SK-N-SH (cell line): ENCODE measurements at regions of chr12 and their contacts with region 1.

Region 1: GRCh38 chr12:125183187-125184067 is 118.2 kb downstream of the AACS start:
- DNase-seq: peak; percentile 92
- H3K4me3 ChIP-seq: peak overlapping the region in 1 of 2 experiments; percentile 5; a peak in 2 of 4 replicates
- H3K27ac ChIP-seq: no peak overlapping the region
- H3K4me1 ChIP-seq: no peaks in the 10 kb centered on the region; a peak in 1 of 4 replicates
- H3K27me3 ChIP-seq: peaks cover 25% of the 10 kb centered on the region
- CTCF ChIP-seq: peak; percentile 95
- EP300 ChIP-seq: no peak
- RAD21 ChIP-seq: peak; percentile 95

Region 2: GRCh38 chr12:125169870-125170269 is 13.6 kb before region 1 on chr12:
- CTCF ChIA-PET with region 1: interaction called, 22 read pairs
- POLR2A ChIA-PET with region 1: no interaction called
- DNase-seq: no peak
- H3K4me3 ChIP-seq: no peak overlapping the region
- H3K27ac ChIP-seq: no peak overlapping the region
- H3K4me1 ChIP-seq: no peaks in the 10 kb centered on the region
- H3K27me3 ChIP-seq: no peaks in the 10 kb centered on the region; the same call in 1 of the 2 replicates
- CTCF ChIP-seq: no peak
- EP300 ChIP-seq: no peak
- RAD21 ChIP-seq: no peak

Region 3: DNA sequence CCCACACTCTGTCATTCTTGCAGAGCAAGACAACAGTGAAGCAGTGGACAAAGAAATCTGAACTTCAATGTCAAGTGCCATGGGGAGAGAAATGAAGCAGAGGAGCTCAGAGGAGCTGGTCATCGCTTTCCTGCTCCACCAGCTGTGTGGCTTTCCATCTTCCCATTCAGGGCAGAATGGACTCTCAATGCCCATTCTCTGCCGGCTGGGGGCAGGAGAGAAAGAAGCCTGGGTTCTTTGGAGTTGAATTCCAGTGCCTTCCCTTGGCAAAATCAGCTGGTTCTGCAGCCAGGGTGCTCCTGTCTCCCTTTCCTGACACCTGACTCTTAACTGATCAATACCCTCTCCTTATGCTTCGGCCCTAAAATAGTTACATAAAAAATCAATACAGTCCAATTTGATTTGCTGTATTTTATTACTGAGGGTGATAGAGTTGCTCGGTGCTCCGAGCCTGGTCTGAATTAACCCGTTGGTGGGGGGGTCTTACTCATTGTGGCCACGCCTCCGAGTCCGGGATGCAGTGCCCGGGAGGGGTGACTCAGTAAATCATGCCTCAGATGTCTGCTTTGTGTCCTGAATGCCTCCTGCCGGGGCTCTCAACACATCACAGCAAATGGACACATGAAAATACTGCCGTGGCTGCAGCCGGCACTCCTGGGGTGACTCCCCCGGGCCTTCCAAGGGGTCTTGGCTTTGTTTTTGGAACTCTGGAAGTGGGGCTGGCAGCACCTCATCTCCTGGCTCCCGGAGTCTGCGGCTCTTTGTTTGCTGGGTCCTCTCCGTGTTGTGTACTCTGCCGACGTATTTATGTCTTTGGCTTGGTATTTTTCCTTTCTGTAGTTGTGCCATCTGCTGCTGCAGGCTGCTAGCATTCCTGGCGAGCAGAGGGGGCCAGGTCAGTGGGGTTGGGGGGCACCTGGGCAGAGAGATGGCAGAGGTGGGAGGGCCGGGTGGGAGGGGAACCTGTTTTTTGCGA is 10.7 kb after region 1 on chr12:
- CTCF ChIA-PET with region 1: interaction called, 62 read pairs
- POLR2A ChIA-PET with region 1: no interaction called
- DNase-seq: peak; percentile 65
- H3K4me3 ChIP-seq: peak overlapping the region; percentile 6 to 32; a peak in 3 of 4 replicates
- H3K27ac ChIP-seq: no peak overlapping the region
- H3K4me1 ChIP-seq: no peaks in the 10 kb centered on the region; a peak in 1 of 4 replicates
- H3K27me3 ChIP-seq: peaks cover 26% of the 10 kb centered on the region
- CTCF ChIP-seq: no peak
- EP300 ChIP-seq: no peak
- RAD21 ChIP-seq: no peak

Region 4: GRCh38 chr12:125203145-125203765 is 19.8 kb after region 1 on chr12:
- CTCF ChIA-PET with region 1: interaction called, 62 read pairs
- POLR2A ChIA-PET with region 1: no interaction called
- DNase-seq: no peak
- H3K4me3 ChIP-seq: no peak overlapping the region
- H3K27ac ChIP-seq: no peak overlapping the region
- H3K4me1 ChIP-seq: no peaks in the 10 kb centered on the region
- H3K27me3 ChIP-seq: no peaks in the 10 kb centered on the region; the same call in 1 of the 2 replicates
- CTCF ChIP-seq: peak; percentile 56
- EP300 ChIP-seq: no peak
- RAD21 ChIP-seq: peak; percentile 50

Region 5: DNA sequence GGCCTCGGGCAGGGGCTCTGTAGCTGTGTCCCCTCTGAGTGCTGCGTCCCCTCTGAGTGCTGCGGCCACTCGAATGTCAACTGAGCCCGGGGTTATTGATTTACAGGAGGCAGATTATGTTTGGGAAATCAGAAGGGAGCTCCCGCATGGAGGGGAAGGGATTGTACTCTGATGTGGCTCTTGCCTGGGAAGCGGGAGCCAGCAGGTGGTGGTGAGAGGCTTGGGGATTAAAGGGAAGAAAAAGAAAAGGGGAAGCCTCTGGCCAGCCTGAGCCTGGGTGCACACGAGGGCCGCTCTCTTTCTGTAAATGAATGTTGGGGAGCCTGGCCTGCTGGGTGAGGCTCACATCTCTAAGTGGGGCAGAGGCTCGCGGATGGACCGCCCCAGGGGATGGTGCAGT is 25.5 kb after region 1 on chr12:
- CTCF ChIA-PET with region 1: interaction called, 11 read pairs
- POLR2A ChIA-PET with region 1: no interaction called
- DNase-seq: no peak
- H3K4me3 ChIP-seq: no peak overlapping the region
- H3K27ac ChIP-seq: no peak overlapping the region
- H3K4me1 ChIP-seq: no peaks in the 10 kb centered on the region
- H3K27me3 ChIP-seq: no peaks in the 10 kb centered on the region; the same call in 1 of the 2 replicates
- CTCF ChIP-seq: no peak
- EP300 ChIP-seq: no peak
- RAD21 ChIP-seq: no peak

Region 6: DNA sequence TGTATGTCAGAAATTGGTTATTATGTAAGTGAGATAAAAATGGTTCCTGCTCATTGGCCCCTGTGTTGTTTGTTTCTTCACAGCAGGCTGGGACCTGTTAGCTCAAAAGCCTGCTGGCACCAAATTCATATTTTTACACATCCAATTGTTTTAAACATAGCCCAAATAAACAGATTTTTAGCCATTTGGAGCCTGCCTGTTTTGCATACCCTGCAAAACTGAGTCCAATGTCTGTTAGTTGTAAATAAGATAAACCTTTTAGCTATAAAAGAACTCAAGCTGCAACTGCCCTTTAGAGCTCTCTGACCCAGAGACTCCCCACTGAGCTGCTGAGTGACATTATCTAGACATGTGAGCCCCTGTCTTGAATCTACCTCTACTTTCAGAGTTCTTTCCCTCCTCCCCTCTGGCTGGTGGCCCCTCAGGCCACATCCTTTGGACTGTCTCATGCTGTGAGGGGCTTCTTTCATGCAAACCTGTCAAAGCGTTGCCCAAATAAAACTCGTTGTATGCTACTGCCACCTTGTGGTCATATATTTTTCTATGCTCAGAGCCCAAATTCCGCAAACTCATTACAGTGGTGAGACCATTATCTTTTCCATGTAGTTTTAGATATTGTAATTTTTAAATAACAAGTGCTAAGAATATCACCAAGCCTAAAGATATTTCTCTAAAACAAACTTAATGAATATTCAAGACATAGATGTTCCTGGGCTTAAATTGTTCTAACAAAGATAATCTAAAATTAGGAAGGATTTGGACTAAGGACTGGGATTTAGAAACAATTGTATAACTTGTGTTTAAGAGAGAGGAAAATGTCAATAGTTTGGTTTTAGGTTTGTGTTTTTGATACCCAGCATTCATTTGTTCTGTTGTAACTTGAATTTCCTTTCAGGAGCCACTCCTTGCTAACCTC is 219.7 kb after region 1 on chr12:
- CTCF ChIA-PET with region 1: interaction called, 64 read pairs
- POLR2A ChIA-PET with region 1: no interaction called
- DNase-seq: peak; percentile 29
- H3K4me3 ChIP-seq: no peak overlapping the region
- H3K27ac ChIP-seq: no peak overlapping the region
- H3K4me1 ChIP-seq: no peaks in the 10 kb centered on the region
- H3K27me3 ChIP-seq: no peaks in the 10 kb centered on the region
- CTCF ChIP-seq: peak; percentile 67
- EP300 ChIP-seq: no peak
- RAD21 ChIP-seq: peak; percentile 71